ENCODE measurements at regions of chr19 and their contacts with region 1.

Region 1: GRCh38 chr19:19361075-19361594 is 40.5 kb downstream of the MAU2 start:
- DNase-seq: peak; percentile 50 to 75 (median 62)
- H3K4me3 ChIP-seq: no peak overlapping the region
- H3K4me3 Mint-ChIP-seq: peak overlapping the region in 6 of 7 donors; percentile 32 to 69 (median 60)
- H3K27ac ChIP-seq: no peak overlapping the region
- H3K27ac Mint-ChIP-seq: peak overlapping the region in 6 of 8 donors; percentile 51 to 94 (median 70)
- H3K4me1 ChIP-seq: peaks cover 33% of the 10 kb centered on the region
- H3K4me1 Mint-ChIP-seq: peaks cover 24 to 43% (median 30%) of the 10 kb centered on the region in 3 donors
- H3K27me3 ChIP-seq: no peaks in the 10 kb centered on the region
- H3K27me3 Mint-ChIP-seq: no peaks in the 10 kb centered on the region

Region 2: GRCh38 chr19:18951665-18952281 is 409.4 kb before region 1 on chr19:
- CTCF ChIA-PET with region 1: no interaction called
- POLR2A ChIA-PET with region 1: interaction called, 12 read pairs
- DNase-seq: no peak
- H3K4me3 ChIP-seq: no peak overlapping the region
- H3K4me3 Mint-ChIP-seq: no peak overlapping the region
- H3K27ac ChIP-seq: no peak overlapping the region
- H3K27ac Mint-ChIP-seq: no peak overlapping the region
- H3K4me1 ChIP-seq: no peaks in the 10 kb centered on the region
- H3K4me1 Mint-ChIP-seq: peaks cover 0 to 15% (median 2%) of the 10 kb centered on the region in 3 donors
- H3K27me3 ChIP-seq: no peaks in the 10 kb centered on the region
- H3K27me3 Mint-ChIP-seq: peaks cover 5 to 8% of the 10 kb centered on the region in 2 donors

Region 3: GRCh38 chr19:19134687-19135158 is 226.4 kb before region 1 on chr19:
- CTCF ChIA-PET with region 1: no interaction called
- POLR2A ChIA-PET with region 1: no interaction called
- DNase-seq: peak in 2 of 5 donors; percentile 15 to 45
- H3K4me3 ChIP-seq: no peak overlapping the region
- H3K4me3 Mint-ChIP-seq: peak overlapping the region in 1 of 7 donors; percentile 48
- H3K27ac ChIP-seq: peak overlapping the region; percentile 9
- H3K27ac Mint-ChIP-seq: no peak overlapping the region
- H3K4me1 ChIP-seq: peaks cover 22% of the 10 kb centered on the region
- H3K4me1 Mint-ChIP-seq: peaks cover 26 to 38% (median 27%) of the 10 kb centered on the region in 3 donors
- H3K27me3 ChIP-seq: no peaks in the 10 kb centered on the region
- H3K27me3 Mint-ChIP-seq: peaks cover 0 to 1% of the 10 kb centered on the region in 2 donors

Region 4: DNA sequence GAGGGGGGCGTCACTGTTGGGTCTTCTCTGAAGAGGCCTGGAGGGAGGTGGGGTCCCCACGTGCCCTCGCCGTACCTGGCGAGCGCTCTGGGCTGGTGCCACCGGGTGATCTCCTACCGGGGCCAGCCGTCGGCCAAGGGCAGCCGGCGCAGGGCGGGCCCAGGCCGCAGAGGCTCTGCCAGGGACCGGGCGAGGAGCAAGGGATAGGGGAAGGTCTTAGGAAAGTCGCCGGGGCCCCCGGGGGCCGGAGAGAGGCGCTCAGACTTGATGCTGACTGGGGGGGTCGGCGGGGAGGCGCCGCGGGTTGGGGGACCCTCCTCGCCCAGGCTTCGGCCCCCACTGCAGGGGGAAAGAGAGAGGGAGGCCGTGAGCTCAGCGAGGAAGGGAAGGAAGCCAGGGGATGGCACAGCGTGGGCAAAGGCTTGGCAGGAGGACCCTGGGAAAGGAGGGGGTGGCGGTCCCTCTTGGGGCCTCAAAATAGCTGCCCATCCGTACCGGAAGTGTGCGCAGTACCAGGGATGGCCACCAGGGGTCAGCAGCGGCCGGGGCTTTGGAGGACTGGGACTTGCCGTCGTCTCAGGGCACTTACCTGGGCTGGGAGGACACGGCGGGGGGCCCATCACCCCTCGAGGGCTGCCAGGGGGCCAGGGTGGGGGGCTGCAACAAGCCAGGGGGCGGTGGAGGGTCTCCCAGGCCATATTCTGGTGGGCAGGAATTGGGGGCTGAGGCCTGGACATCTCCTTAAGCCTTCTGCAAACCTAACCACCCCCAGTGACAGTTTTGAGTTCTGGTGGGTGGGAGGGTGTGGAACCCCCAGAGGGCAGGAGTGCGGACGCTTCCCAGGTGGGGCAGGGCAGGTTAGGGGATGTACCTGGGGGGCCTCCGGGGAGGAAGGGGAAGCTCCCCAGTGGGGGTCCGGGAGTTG is 215.2 kb before region 1 on chr19:
- CTCF ChIA-PET with region 1: no interaction called
- POLR2A ChIA-PET with region 1: no interaction called
- DNase-seq: peak; percentile 73 to 87 (median 79)
- H3K4me3 ChIP-seq: no peak overlapping the region
- H3K4me3 Mint-ChIP-seq: no peak overlapping the region
- H3K27ac ChIP-seq: no peak overlapping the region
- H3K27ac Mint-ChIP-seq: no peak overlapping the region
- H3K4me1 ChIP-seq: no peaks in the 10 kb centered on the region
- H3K4me1 Mint-ChIP-seq: no peaks in the 10 kb centered on the region
- H3K27me3 ChIP-seq: no peaks in the 10 kb centered on the region
- H3K27me3 Mint-ChIP-seq: no peaks in the 10 kb centered on the region

Region 5: GRCh38 chr19:19372656-19373416 is 11.7 kb after region 1 on chr19:
- CTCF ChIA-PET with region 1: interaction called, 4 read pairs
- POLR2A ChIA-PET with region 1: interaction called, 10 read pairs
- DNase-seq: peak in 3 of 5 donors; percentile 27 to 64 (median 32)
- H3K4me3 ChIP-seq: peak overlapping the region; percentile 40
- H3K4me3 Mint-ChIP-seq: peak overlapping the region in 6 of 7 donors; percentile 12 to 68 (median 53)
- H3K27ac ChIP-seq: peak overlapping the region; percentile 64
- H3K27ac Mint-ChIP-seq: peak overlapping the region; percentile 61 to 95 (median 86)
- H3K4me1 ChIP-seq: peaks cover 13% of the 10 kb centered on the region
- H3K4me1 Mint-ChIP-seq: peaks cover 9% of the 10 kb centered on the region in 3 donors
- H3K27me3 ChIP-seq: no peaks in the 10 kb centered on the region
- H3K27me3 Mint-ChIP-seq: no peaks in the 10 kb centered on the region

Region 6: DNA sequence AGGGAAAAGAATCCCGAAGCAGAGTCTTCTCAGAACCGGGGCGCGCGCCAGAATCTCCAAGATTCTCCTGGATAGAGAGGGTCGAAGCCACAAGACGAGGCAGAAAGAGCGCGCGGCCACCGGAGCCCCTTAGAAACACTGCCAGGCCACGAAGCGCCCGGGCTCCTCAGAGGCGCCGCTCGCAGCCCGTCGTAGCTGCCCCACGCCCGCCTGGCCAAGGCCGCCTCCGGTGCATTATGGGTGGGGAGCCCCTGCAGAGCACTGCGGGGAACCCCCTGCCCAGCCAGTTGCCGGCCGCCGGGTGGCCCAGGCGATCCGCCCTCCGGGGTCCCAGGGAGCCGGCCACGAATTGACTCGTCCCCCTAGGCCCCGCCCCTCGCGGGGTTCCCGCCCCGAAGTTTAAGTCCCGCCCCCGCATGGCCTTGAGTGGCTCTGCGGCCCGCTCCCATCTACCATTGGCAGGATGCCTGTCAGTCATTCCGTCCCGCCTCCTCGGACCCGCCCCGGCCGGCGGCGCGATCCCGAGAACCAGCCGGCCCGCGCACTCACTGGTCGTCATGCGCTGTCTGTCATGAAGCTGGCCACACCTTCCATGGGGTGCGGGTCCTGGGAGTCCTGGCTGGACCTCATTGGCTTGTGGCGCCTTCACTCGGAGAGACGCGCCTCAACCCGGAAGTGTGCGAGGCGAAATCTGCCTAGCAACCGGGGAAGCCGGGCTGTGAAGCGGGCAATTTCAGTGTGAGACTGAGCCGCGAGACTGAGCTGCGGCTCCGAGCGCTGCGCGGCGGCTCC is 24.2 kb after region 1 on chr19:
- CTCF ChIA-PET with region 1: interaction called, 3 read pairs
- POLR2A ChIA-PET with region 1: interaction called, 11 read pairs
- DNase-seq: peak in 4 of 5 donors; percentile 98 to 100 (median 99)
- H3K4me3 ChIP-seq: peak overlapping the region; percentile 74
- H3K4me3 Mint-ChIP-seq: peak overlapping the region; percentile 86 to 96 (median 92)
- H3K27ac ChIP-seq: peak overlapping the region; percentile 90
- H3K27ac Mint-ChIP-seq: peak overlapping the region; percentile 84 to 96 (median 92)
- H3K4me1 ChIP-seq: peaks cover 47% of the 10 kb centered on the region
- H3K4me1 Mint-ChIP-seq: peaks cover 39 to 40% (median 40%) of the 10 kb centered on the region in 3 donors
- H3K27me3 ChIP-seq: no peaks in the 10 kb centered on the region
- H3K27me3 Mint-ChIP-seq: no peaks in the 10 kb centered on the region